ENCODE measurements at regions of chr1 and their contacts with region 1.

Region 1: GRCh38 chr1:234610348-234611152 is 572 bp upstream of the IRF2BP2 start:
- DNase-seq: peak; percentile 75 to 97 (median 86)
- ATAC-seq: peak; percentile 40
- H3K4me3 ChIP-seq: peak overlapping the region; percentile 68
- H3K4me3 Mint-ChIP-seq: peak overlapping the region; percentile 99
- H3K27ac ChIP-seq: peak overlapping the region; percentile 93 to 99
- H3K27ac Mint-ChIP-seq: peak overlapping the region; percentile 99
- H3K4me1 ChIP-seq: peaks cover 48% of the 10 kb centered on the region
- H3K4me1 Mint-ChIP-seq: peaks cover 61% of the 10 kb centered on the region
- H3K27me3 ChIP-seq: no peaks in the 10 kb centered on the region
- H3K27me3 Mint-ChIP-seq: peaks cover 10% of the 10 kb centered on the region
- CTCF ChIP-seq: no peak

Region 2: DNA sequence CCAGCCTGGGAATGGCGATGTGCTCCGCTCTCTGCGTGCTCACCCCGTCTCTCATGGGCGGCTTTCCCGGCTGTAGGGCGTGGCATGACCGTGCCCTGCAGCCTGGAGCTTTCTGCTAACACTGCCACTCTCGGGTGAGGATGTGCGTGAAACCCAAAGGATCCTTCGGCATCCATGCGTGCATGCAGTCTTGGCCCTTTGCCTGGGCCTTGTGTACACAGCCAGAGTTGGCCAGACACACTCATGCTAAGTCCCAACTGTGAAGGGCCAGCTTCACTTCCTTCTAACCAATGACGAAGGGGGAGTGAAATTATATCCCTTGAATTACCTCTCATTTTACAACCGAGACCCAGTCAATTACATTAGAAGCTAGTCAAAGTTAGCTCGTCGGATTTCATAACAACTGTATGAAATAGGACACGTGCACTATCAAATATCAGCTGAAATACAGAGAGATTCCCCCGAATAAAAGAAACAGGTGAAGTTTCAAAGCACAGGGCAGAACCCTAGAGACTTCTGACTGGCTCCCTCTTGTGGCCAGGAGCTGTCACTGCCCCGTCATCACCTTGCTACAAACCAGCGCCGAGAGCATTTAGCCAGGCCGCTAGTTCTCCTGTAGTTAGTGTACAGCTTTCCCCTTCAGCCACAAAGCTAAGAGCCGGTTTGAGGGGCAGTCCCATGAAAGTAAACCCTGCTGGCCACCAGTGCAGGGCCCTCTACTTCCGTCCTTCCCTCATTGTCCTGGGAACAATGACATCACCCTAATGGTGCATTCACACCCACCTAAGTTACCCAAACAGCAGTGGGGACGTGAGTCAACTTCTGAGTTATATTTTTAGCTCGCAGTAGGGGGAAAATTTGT is 300.7 kb before region 1 on chr1:
- CTCF ChIA-PET with region 1: no interaction called
- POLR2A ChIA-PET with region 1: no interaction called
- intact Hi-C with region 1: no loop called
- DNase-seq: peak; percentile 55 to 89 (median 69)
- ATAC-seq: peak; percentile 96
- H3K4me3 ChIP-seq: no peak overlapping the region
- H3K4me3 Mint-ChIP-seq: no peak overlapping the region
- H3K27ac ChIP-seq: no peak overlapping the region
- H3K27ac Mint-ChIP-seq: peak overlapping the region; percentile 43
- H3K4me1 ChIP-seq: peaks cover 38% of the 10 kb centered on the region
- H3K4me1 Mint-ChIP-seq: peaks cover 18% of the 10 kb centered on the region
- H3K27me3 ChIP-seq: no peaks in the 10 kb centered on the region
- H3K27me3 Mint-ChIP-seq: no peaks in the 10 kb centered on the region
- CTCF ChIP-seq: peak; percentile 95

Region 3: GRCh38 chr1:234531151-234531635 is 79.4 kb before region 1 on chr1:
- CTCF ChIA-PET with region 1: no interaction called
- POLR2A ChIA-PET with region 1: no interaction called
- intact Hi-C with region 1: no loop called
- DNase-seq: no peak
- ATAC-seq: no peak
- H3K4me3 ChIP-seq: no peak overlapping the region
- H3K4me3 Mint-ChIP-seq: no peak overlapping the region
- H3K27ac ChIP-seq: no peak overlapping the region
- H3K27ac Mint-ChIP-seq: no peak overlapping the region
- H3K4me1 ChIP-seq: no peaks in the 10 kb centered on the region
- H3K4me1 Mint-ChIP-seq: no peaks in the 10 kb centered on the region
- H3K27me3 ChIP-seq: peaks cover 0 to 4% of the 10 kb centered on the region in 2 experiments
- H3K27me3 Mint-ChIP-seq: peaks cover 4% of the 10 kb centered on the region
- CTCF ChIP-seq: no peak

Region 4: GRCh38 chr1:234599617-234600417 is 10.7 kb before region 1 on chr1:
- CTCF ChIA-PET with region 1: interaction called, 17 read pairs
- POLR2A ChIA-PET with region 1: interaction called, 291 read pairs
- intact Hi-C with region 1: loop called in 1 of 2 experiments (anchors 1 kb)
- DNase-seq: peak; percentile 28 to 94 (median 66)
- ATAC-seq: peak; percentile 62
- H3K4me3 ChIP-seq: peak overlapping the region; percentile 65
- H3K4me3 Mint-ChIP-seq: peak overlapping the region; percentile 90
- H3K27ac ChIP-seq: peak overlapping the region; percentile 81 to 95
- H3K27ac Mint-ChIP-seq: peak overlapping the region; percentile 98
- H3K4me1 ChIP-seq: peaks cover 45% of the 10 kb centered on the region
- H3K4me1 Mint-ChIP-seq: peaks cover 61% of the 10 kb centered on the region
- H3K27me3 ChIP-seq: no peaks in the 10 kb centered on the region
- H3K27me3 Mint-ChIP-seq: no peaks in the 10 kb centered on the region
- CTCF ChIP-seq: no peak

Region 5: DNA sequence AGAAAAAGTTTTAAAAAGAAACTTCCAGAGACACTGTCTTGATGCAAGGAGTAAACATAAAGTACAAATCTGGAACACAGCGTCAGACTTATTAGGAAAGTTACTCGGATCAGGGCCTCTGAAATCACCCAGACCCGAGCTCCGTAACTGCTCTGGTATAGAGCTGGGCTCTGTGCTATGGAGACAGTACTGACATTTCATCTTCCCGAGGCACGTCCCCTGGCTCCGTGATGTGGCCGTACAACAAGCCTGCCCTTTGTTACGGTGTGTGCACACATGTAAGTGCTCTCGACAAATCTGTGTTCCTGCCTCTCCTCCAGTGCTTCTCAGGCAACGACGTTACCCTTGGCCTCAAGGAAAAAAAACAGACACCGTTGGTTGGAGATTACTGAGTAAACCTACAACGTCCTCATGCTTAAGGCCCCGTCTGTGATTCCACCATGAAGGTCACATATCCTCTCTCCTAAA is 106.4 kb after region 1 on chr1:
- CTCF ChIA-PET with region 1: interaction called, 3 read pairs
- POLR2A ChIA-PET with region 1: interaction called, 238 read pairs
- intact Hi-C with region 1: no loop called
- DNase-seq: no peak
- ATAC-seq: no peak
- H3K4me3 ChIP-seq: no peak overlapping the region
- H3K4me3 Mint-ChIP-seq: no peak overlapping the region
- H3K27ac ChIP-seq: no peak overlapping the region
- H3K27ac Mint-ChIP-seq: no peak overlapping the region
- H3K4me1 ChIP-seq: peaks cover 4% of the 10 kb centered on the region
- H3K4me1 Mint-ChIP-seq: peaks cover 41% of the 10 kb centered on the region
- H3K27me3 ChIP-seq: no peaks in the 10 kb centered on the region
- H3K27me3 Mint-ChIP-seq: no peaks in the 10 kb centered on the region
- CTCF ChIP-seq: no peak

Region 6: GRCh38 chr1:234758851-234759250 is 148.3 kb after region 1 on chr1:
- CTCF ChIA-PET with region 1: no interaction called
- POLR2A ChIA-PET with region 1: interaction called, 21 read pairs
- intact Hi-C with region 1: no loop called
- DNase-seq: peak in 10 of 14 experiments; percentile 19 to 90 (median 46)
- ATAC-seq: peak; percentile 85
- H3K4me3 ChIP-seq: no peak overlapping the region
- H3K4me3 Mint-ChIP-seq: peak overlapping the region; percentile 31
- H3K27ac ChIP-seq: no peak overlapping the region
- H3K27ac Mint-ChIP-seq: peak overlapping the region; percentile 93
- H3K4me1 ChIP-seq: peaks cover 37% of the 10 kb centered on the region
- H3K4me1 Mint-ChIP-seq: peaks cover 58% of the 10 kb centered on the region
- H3K27me3 ChIP-seq: no peaks in the 10 kb centered on the region
- H3K27me3 Mint-ChIP-seq: no peaks in the 10 kb centered on the region
- CTCF ChIP-seq: no peak

Region 7: GRCh38 chr1:234925440-234926263 is 315.1 kb after region 1 on chr1:
- CTCF ChIA-PET with region 1: no interaction called
- POLR2A ChIA-PET with region 1: interaction called, 21 read pairs
- intact Hi-C with region 1: loop called in 1 of 2 experiments (anchors 1 kb)
- DNase-seq: peak in 4 of 14 experiments; percentile 48 to 67 (median 62)
- ATAC-seq: peak; percentile 58
- H3K4me3 ChIP-seq: peak overlapping the region; percentile 43
- H3K4me3 Mint-ChIP-seq: peak overlapping the region; percentile 42
- H3K27ac ChIP-seq: no peak overlapping the region
- H3K27ac Mint-ChIP-seq: peak overlapping the region; percentile 76
- H3K4me1 ChIP-seq: peaks cover 60% of the 10 kb centered on the region
- H3K4me1 Mint-ChIP-seq: peaks cover 55% of the 10 kb centered on the region
- H3K27me3 ChIP-seq: no peaks in the 10 kb centered on the region
- H3K27me3 Mint-ChIP-seq: no peaks in the 10 kb centered on the region
- CTCF ChIP-seq: no peak

Region 8: GRCh38 chr1:235075188-235075926 is 464.8 kb after region 1 on chr1:
- CTCF ChIA-PET with region 1: no interaction called
- POLR2A ChIA-PET with region 1: no interaction called
- intact Hi-C with region 1: loop called in 1 of 2 experiments (anchors 5 kb)
- DNase-seq: peak in 11 of 14 experiments; percentile 10 to 80 (median 29)
- ATAC-seq: peak; percentile 68
- H3K4me3 ChIP-seq: peak overlapping the region; percentile 15
- H3K4me3 Mint-ChIP-seq: no peak overlapping the region
- H3K27ac ChIP-seq: no peak overlapping the region
- H3K27ac Mint-ChIP-seq: peak overlapping the region; percentile 73
- H3K4me1 ChIP-seq: peaks cover 38% of the 10 kb centered on the region
- H3K4me1 Mint-ChIP-seq: peaks cover 16% of the 10 kb centered on the region
- H3K27me3 ChIP-seq: no peaks in the 10 kb centered on the region
- H3K27me3 Mint-ChIP-seq: no peaks in the 10 kb centered on the region
- CTCF ChIP-seq: no peak